ENCODE measurements at regions of chr5 and their contacts with region 1.

Region 1: DNA sequence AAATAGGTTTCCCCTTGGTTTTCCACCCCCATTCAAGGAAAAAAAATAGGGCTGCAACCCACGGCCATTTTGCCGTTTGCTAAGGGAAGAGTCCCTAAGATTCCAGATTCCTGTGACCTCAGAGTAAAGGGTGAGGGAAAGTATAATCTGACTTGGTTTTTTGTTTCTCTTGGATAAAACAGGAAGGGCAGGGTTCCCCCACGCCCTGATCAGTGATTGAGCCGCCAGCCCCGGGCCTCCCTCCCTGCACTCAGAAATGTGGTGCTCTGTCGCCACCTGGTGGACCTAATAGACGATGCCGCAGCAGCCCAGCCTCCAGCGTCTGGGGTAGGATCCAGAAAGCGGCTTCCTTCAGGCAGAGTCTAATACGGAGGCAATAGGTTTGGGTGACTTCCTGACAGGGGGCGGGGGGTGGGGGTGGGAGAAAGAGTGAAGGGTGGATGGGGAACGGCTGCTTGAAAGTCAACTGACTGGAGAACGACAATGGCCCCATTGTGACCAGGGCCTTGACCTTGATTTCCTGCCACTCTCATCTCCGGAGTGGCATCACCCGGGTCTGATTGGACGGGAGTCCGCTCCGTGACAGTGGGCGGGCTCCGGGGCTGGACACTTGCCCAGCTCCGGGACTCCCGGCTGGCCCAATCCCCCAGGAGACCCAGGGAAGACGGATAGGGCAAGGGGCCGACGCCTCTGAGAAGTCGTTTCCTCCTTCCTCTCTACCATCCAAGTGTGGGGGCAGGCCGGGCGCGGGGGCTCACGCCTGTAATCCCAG is 17.8 kb upstream of the CYSTM1 start:
- DNase-seq: peak; percentile 95
- ATAC-seq: peak; percentile 96

Region 2: GRCh38 chr5:140073296-140073695 is 83.9 kb before region 1 on chr5:
- intact Hi-C with region 1: loop called (anchors 5 kb)
- DNase-seq: no peak
- ATAC-seq: no peak